AG04450 (cell line): ENCODE measurements at regions of chr6 and their contacts with region 1.

Region 1: GRCh38 chr6:148509800-148510581 is 167.4 kb downstream of the SASH1 start:
- DNase-seq: peak; percentile 95
- H3K4me3 ChIP-seq: peak overlapping the region; percentile 62
- H3K27ac ChIP-seq: peak overlapping the region; percentile 90
- H3K27me3 ChIP-seq: no peaks in the 10 kb centered on the region
- CTCF ChIP-seq: no peak

Region 2: GRCh38 chr6:148524976-148525375 is 15.0 kb after region 1 on chr6:
- CTCF ChIA-PET with region 1: no interaction called
- POLR2A ChIA-PET with region 1: interaction called, 27 read pairs
- DNase-seq: no peak
- H3K4me3 ChIP-seq: peak overlapping the region; percentile 47
- H3K27ac ChIP-seq: peak overlapping the region; percentile 98
- H3K27me3 ChIP-seq: no peaks in the 10 kb centered on the region
- CTCF ChIP-seq: no peak

Region 3: GRCh38 chr6:148530394-148530953 is 20.5 kb after region 1 on chr6:
- CTCF ChIA-PET with region 1: no interaction called
- POLR2A ChIA-PET with region 1: interaction called, 27 read pairs
- DNase-seq: peak; percentile 93
- H3K4me3 ChIP-seq: peak overlapping the region; percentile 39
- H3K27ac ChIP-seq: peak overlapping the region; percentile 97
- H3K27me3 ChIP-seq: no peaks in the 10 kb centered on the region
- CTCF ChIP-seq: no peak